ENCODE measurements at regions of chr1 and their contacts with region 1.

Region 1: DNA sequence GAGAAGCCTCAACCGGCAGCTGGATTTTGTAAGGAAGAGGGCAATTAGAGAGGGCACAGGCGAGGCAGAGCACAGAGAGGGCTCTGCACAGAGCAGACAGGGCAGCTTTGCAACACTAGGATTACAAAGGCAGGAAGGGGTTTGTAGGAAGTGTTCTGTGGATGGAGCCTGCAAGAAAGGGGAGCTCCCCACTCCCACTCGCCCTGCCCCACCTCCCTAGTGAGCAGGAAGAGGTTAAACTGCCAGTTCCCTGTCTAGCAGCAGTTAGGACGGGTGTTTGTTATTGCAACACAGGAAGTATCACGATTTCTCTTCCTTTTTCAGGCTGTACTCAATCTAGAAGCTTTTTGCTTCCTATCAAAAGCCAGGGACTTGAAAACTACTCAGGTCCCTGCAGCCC is 63.3 kb upstream of the LRRC8D start:
- DNase-seq: peak; percentile 51
- H3K4me3 Mint-ChIP-seq: peak overlapping the region; percentile 78
- H3K27ac Mint-ChIP-seq: peak overlapping the region; percentile 93
- H3K4me1 Mint-ChIP-seq: peaks cover 89% of the 10 kb centered on the region
- H3K27me3 Mint-ChIP-seq: no peaks in the 10 kb centered on the region

Region 2: DNA sequence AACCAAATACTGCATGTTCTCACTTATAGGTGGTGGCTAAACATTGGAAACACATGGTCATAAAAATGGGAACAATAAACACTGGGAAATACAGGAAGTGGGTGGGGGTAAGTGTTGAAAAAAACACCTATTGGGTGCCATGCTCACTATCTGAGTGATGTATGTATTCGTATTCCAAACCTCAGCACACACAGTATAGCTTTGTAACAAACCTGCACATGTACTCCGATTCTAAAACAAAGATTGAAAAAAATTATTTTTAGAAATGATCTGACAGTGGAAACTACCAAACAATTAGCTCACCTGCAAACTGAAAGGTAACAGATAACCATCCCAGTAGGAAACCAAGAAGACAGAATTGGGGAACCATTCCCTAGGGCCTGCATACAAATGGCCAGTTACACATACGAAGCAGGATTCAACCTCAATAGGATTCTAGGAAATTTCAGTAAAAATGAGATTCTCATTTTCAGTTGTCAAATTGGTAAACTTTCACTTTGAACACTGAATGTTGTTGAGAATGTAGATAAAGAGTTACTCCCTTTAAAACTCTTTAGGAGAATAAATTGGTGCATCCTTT is 24.8 kb before region 1 on chr1:
- intact Hi-C with region 1: loop called (anchors 1 kb)
- DNase-seq: no peak
- H3K4me3 Mint-ChIP-seq: peak overlapping the region; percentile 47
- H3K27ac Mint-ChIP-seq: peak overlapping the region; percentile 86
- H3K4me1 Mint-ChIP-seq: peaks cover 73% of the 10 kb centered on the region
- H3K27me3 Mint-ChIP-seq: no peaks in the 10 kb centered on the region

Region 3: GRCh38 chr1:89739013-89739843 is 18.3 kb before region 1 on chr1:
- intact Hi-C with region 1: loop called (anchors 1 kb)
- DNase-seq: no peak
- H3K4me3 Mint-ChIP-seq: peak overlapping the region; percentile 72
- H3K27ac Mint-ChIP-seq: peak overlapping the region; percentile 95
- H3K4me1 Mint-ChIP-seq: peaks cover 76% of the 10 kb centered on the region
- H3K27me3 Mint-ChIP-seq: peaks cover 3% of the 10 kb centered on the region

Measured in activated T-helper 1 cell treated with anti-CD3 and anti-CD28 coated beads, Interleukin-12 subunit alpha, Interleukin-12 subunit beta, Interleukin-2, Interleukin-4 antibody, amounts not matched to agents 30 ng/mL and 10 ng/mL and 1 ng/mL, durations not matched to agents 14 hours and 24 hours and 36 hours (primary cell).